ENCODE measurements at regions of chr12 and their contacts with region 1.

Region 1: DNA sequence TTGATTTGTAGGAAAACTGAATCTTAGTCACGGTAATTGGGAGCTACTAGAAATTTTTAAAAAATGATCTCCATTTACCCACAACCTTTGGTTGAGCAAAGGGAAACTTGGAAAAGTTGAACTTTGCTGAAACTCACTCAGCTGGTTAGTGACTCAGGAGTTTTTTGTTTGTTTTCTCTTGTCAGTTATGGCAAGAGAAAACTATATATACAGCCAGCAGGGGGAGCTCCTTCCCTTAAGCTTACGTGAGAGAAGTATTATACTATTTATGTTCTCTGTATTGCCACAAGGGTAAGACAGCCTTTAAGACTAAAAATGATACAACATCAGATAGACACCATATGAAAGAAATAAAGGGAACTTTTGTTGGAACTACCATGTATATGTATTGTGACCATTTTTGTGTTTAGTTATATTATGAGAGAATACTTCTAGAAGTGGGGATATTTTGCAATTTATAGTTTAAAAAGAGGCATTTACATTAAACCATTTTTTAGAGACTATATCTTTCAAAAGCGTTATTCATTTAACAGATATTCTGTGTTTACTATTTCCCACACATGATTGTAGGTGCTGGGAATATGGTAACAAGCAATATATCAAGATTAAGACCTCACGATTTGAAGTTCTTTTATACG is 28.1 kb upstream of the TBC1D30 start:
- DNase-seq: peak; percentile 83
- ATAC-seq: peak; percentile 96
- H3K4me3 ChIP-seq: no peak overlapping the region
- H3K27ac ChIP-seq: no peak overlapping the region; the same call in 1 of the 2 replicates
- H3K4me1 ChIP-seq: peaks cover 0 to 11% of the 10 kb centered on the region in 2 experiments; a peak in 2 of 4 replicates
- H3K27me3 ChIP-seq: no peaks in the 10 kb centered on the region
- CTCF ChIP-seq: peak; percentile 76 to 93 (median 83)
- POLR2A ChIP-seq: no peak
- RAD21 ChIP-seq: peak; percentile 63

Region 2: DNA sequence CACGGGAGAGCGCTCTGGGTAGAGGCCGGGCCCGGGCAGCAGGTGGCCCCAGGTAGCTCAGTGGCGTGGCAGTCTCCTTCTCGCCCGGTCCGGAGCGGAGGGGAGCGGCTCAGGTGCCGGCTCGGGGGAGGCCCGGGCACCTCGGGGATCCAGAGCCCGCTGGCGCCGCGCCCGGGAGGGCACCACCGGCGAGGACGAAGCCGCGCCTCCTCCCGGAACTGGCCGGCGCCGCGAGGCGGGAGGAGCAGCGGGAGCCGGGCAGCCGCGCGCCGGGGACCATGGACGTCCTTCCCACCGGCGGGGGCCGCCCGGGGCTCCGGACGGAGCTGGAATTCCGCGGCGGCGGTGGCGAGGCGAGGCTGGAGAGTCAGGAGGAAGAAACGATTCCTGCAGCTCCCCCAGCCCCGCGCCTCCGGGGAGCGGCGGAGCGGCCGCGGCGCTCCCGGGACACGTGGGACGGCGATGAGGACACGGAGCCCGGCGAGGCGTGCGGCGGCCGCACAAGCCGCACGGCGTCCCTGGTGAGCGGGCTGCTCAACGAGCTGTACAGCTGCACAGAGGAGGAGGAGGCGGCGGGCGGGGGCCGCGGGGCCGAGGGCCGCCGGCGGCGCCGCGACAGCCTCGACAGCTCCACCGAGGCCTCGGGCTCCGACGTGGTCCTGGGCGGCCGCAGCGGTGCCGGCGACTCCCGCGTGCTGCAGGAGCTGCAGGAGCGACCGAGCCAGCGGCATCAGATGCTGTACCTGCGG is 15.6 kb before region 1 on chr12:
- CTCF ChIA-PET with region 1: interaction called, 23 read pairs
- POLR2A ChIA-PET with region 1: interaction called, 5 read pairs
- RAD21 ChIA-PET with region 1: no interaction called
- intact Hi-C with region 1: no loop called
- DNase-seq: no peak
- ATAC-seq: peak; percentile 85
- H3K4me3 ChIP-seq: peak overlapping the region; percentile 57 to 78
- H3K27ac ChIP-seq: peak overlapping the region; percentile 88
- H3K4me1 ChIP-seq: peaks cover 12 to 20% of the 10 kb centered on the region in 2 experiments
- H3K27me3 ChIP-seq: no peaks in the 10 kb centered on the region
- CTCF ChIP-seq: 0 out of 6 replicates have a peak, but pooled peaks of 1 of the 3 experiments have one; percentile 5
- POLR2A ChIP-seq: peak; percentile 31
- RAD21 ChIP-seq: no peak

Region 3: GRCh38 chr12:65100140-65100539 is 303.8 kb after region 1 on chr12:
- CTCF ChIA-PET with region 1: no interaction called
- POLR2A ChIA-PET with region 1: no interaction called
- RAD21 ChIA-PET with region 1: no interaction called
- intact Hi-C with region 1: loop called (anchors 5 kb)
- DNase-seq: no peak
- ATAC-seq: 0 out of 2 replicates have a peak, but pooled peaks have one; percentile 49
- H3K4me3 ChIP-seq: no peak overlapping the region
- H3K27ac ChIP-seq: no peak overlapping the region
- H3K4me1 ChIP-seq: no peaks in the 10 kb centered on the region
- H3K27me3 ChIP-seq: peaks cover 20% of the 10 kb centered on the region; the same call in 1 of the 2 replicates
- CTCF ChIP-seq: peak; percentile 31 to 48 (median 42); a peak in 5 of 6 replicates
- POLR2A ChIP-seq: no peak
- RAD21 ChIP-seq: peak; percentile 59